GM10248 (cell line): ENCODE measurements at regions of chr5 and their contacts with region 1.

Region 1: GRCh38 chr5:31232273-31232888 is 38.9 kb downstream of the CDH6 start:
- DNase-seq: peak; percentile 30
- CTCF ChIP-seq: peak; percentile 68

Region 2: DNA sequence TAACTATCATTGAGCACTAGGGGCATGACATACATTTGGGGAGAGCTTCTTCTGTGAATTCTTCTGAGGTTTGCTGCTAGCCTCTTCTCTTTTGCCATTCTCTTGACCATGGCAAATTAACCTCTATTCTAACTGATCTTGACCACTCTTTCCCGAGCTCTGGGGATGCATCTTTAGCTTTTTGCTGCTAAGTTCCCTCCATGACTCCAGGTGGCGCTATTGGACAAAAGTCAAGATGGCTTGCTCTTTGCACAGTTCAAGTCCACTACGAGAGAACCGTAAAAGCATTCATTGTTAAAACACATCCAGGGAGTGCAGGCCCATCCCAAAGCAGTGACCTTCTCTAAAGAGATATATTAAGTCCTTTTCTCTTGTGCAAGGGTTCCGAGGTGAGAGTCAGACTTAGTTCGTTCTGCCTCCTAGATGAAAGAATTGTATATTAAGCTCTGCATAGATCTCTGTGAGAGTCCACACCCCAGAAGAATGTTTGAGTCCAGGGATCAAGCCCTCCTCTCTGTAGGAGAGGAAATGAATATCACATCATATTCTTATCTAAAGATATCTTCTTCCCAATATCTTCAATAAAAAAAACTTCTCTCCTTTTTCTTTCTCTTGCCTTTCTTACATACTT is 1191.8 kb before region 1 on chr5:
- CTCF ChIA-PET with region 1: interaction called, 26 read pairs
- POLR2A ChIA-PET with region 1: no interaction called
- DNase-seq: peak; percentile 15
- CTCF ChIP-seq: peak; percentile 64

Region 3: DNA sequence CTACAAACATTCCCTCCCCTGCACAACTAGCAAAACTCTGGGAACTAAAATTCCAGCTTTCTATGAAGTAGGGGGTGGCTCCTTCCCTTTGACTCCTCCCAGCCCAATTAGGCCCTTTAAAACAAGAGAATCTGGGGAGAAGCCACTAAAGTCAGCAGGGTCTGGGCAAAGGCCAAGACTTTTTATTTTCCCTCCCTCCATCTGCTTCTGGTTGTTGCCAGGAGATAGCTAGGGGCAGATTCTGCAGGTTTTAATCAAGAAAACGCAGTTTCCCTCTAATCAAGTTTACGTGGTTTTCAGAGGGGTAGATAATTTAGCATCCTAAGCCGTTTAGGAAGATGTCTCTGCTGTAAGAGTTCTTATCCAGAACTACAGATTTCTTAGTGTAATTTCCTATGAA is 153.4 kb before region 1 on chr5:
- CTCF ChIA-PET with region 1: no interaction called
- POLR2A ChIA-PET with region 1: no interaction called
- DNase-seq: no peak
- CTCF ChIP-seq: no peak

Region 4: DNA sequence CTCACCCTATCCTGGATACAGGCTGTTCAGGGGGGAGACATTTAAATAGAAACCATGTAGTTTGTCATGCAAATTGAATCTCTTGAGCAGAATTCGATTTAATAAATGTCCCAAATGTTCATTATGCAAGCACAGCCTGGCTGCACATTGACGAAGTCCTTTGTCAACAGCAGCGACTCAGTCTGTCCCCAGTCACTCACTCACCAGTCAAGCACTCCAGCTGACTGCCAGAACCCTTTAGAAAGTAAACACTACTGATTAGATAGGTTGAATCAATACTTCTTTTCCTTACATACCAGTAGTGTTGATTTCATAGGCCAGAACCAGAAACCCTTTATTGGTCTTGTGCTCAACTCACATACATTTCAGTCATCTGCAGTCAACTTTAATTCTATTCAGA is 11.4 kb before region 1 on chr5:
- CTCF ChIA-PET with region 1: interaction called, 11 read pairs
- POLR2A ChIA-PET with region 1: no interaction called
- DNase-seq: no peak
- CTCF ChIP-seq: no peak